ENCODE measurements at regions of chr19 and their contacts with region 1.

Region 1: GRCh38 chr19:49443366-49444099 is 2.2 kb upstream of the SLC17A7 start:
- DNase-seq: no peak
- ATAC-seq: peak; percentile 89
- H3K4me3 ChIP-seq: peak overlapping the region; percentile 61 to 63
- H3K27ac ChIP-seq: no peak overlapping the region
- H3K4me1 ChIP-seq: no peaks in the 10 kb centered on the region; the same call in 1 of the 2 replicates
- H3K27me3 ChIP-seq: peaks cover 9% of the 10 kb centered on the region; the same call in 1 of the 2 replicates
- CTCF ChIP-seq: peak; percentile 94

Region 2: GRCh38 chr19:49309087-49309486 is 134.4 kb before region 1 on chr19:
- CTCF ChIA-PET with region 1: no interaction called
- POLR2A ChIA-PET with region 1: no interaction called
- in situ Hi-C with region 1: no loop called
- intact Hi-C with region 1: no loop called
- DNase-seq: no peak
- ATAC-seq: no peak
- H3K4me3 ChIP-seq: no peak overlapping the region
- H3K27ac ChIP-seq: no peak overlapping the region
- H3K4me1 ChIP-seq: no peaks in the 10 kb centered on the region
- H3K27me3 ChIP-seq: no peaks in the 10 kb centered on the region
- CTCF ChIP-seq: no peak

Region 3: GRCh38 chr19:49374665-49375434 is 68.7 kb before region 1 on chr19:
- CTCF ChIA-PET with region 1: interaction called, 10 read pairs
- POLR2A ChIA-PET with region 1: no interaction called
- in situ Hi-C with region 1: no loop called
- intact Hi-C with region 1: no loop called
- DNase-seq: no peak
- ATAC-seq: no peak
- H3K4me3 ChIP-seq: no peak overlapping the region
- H3K27ac ChIP-seq: no peak overlapping the region
- H3K4me1 ChIP-seq: no peaks in the 10 kb centered on the region
- H3K27me3 ChIP-seq: no peaks in the 10 kb centered on the region
- CTCF ChIP-seq: no peak

Region 4: DNA sequence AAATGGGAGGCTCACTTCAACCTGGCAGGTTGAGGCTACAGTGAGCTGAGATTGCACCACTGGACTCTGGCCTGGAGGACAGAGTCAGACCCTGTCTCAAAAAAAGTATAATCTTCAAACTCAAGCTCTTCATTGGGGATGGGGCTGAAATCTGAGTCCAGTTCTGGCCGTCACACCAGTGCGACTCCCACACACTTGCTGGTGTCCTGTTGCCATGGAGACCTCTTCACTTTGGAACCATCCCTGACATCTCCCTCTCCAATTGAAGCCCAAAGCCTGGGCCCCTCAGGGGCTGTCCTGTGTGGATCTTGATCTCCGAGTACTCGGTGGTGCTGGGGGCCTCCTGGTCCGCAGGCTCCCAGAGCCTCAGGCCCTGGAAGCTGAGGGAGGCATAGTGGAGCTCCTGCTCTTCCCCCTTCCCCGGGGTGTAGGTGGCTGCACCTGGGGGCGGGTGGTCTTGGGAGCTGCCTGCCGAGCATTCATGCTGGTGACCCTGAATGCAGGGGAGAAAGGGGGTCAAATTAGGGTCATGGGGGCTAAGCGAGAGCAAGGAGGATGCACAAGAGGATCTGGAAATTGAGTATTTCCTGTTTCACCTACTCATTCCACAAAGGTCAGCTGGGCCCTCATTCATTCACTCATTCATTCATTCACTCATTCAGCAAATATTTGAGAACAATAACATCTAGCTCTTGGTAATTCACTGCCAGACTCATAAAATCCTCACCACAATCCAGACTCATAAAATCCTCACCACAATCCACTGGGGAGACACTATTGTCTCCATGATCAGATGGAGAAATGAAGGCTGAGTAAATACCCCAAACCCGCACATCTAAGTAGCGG is 506.4 kb after region 1 on chr19:
- CTCF ChIA-PET with region 1: no interaction called
- POLR2A ChIA-PET with region 1: no interaction called
- in situ Hi-C with region 1: no loop called
- intact Hi-C with region 1: no loop called
- DNase-seq: no peak
- ATAC-seq: no peak
- H3K4me3 ChIP-seq: no peak overlapping the region
- H3K27ac ChIP-seq: no peak overlapping the region
- H3K4me1 ChIP-seq: no peaks in the 10 kb centered on the region
- H3K27me3 ChIP-seq: no peaks in the 10 kb centered on the region
- CTCF ChIP-seq: no peak

Measured in Panc1 (cell line).